Activated CD4-positive, alpha-beta T cell treated with anti-CD3 and anti-CD28 coated beads, Interleukin-2, amount 10 ng/mL, durations not matched to agents 24 days and 14 days (primary cell): ENCODE measurements at regions of chr7 and their contacts with region 1.

Region 1: GRCh38 chr7:104267701-104268368 is 60.0 kb upstream of the ORC5 start:
- DNase-seq: no peak
- H3K4me3 Mint-ChIP-seq: no peak overlapping the region
- H3K27ac Mint-ChIP-seq: no peak overlapping the region
- H3K4me1 Mint-ChIP-seq: no peaks in the 10 kb centered on the region
- H3K27me3 Mint-ChIP-seq: peaks cover 7% of the 10 kb centered on the region

Region 2: DNA sequence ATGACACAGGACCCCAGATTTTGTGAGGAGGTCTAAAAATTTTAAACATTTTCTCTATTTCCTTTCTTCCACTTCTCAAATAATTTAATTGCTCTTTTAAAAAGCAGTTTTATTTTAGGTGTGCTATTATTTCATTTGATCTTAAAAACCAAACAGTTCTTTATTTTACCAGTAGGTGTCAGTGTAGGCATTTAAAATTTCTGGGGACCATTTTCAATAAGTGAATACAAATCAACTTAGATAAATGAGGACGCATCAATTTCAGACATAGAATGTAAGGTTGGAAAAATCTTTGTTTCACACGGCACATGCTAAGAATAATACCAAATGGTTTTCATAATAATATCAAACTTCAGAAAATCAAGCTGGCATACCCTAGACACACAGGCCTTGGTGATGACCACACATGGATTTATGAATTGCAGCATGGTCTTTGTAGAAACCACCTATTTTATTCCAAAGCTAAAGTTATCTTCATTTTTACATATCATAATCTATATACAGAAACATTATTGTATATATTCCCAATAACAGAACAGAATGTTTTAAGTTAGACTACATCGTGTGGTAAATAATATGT is 694.3 kb before region 1 on chr7:
- intact Hi-C with region 1: loop called (anchors 5 kb)
- DNase-seq: no peak
- H3K4me3 Mint-ChIP-seq: no peak overlapping the region
- H3K27ac Mint-ChIP-seq: no peak overlapping the region
- H3K4me1 Mint-ChIP-seq: no peaks in the 10 kb centered on the region
- H3K27me3 Mint-ChIP-seq: peaks cover 6% of the 10 kb centered on the region

Region 3: DNA sequence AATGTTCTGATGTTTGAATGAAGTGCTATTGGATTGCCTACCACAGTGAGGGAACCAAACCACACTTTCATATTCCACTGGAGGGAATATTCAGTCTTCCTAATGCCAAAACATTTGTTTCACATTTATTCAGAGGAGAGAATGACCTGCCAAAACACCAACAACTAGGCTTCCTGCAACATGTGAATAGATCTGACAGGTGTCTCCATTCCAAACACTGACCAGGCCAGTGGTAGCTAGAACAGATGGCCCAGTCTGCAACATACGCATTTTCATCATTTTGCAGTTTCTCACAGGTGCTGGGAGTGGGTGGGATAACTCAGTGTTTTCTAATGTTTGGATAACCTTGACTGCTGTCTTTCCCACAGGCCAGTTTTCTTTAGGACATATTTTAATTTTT is 388.4 kb before region 1 on chr7:
- intact Hi-C with region 1: no loop called
- DNase-seq: no peak
- H3K4me3 Mint-ChIP-seq: no peak overlapping the region
- H3K27ac Mint-ChIP-seq: no peak overlapping the region
- H3K4me1 Mint-ChIP-seq: no peaks in the 10 kb centered on the region
- H3K27me3 Mint-ChIP-seq: no peaks in the 10 kb centered on the region